Left colon (tissue), 2 donors: ENCODE measurements at regions of chr10 and their contacts with region 1.

Region 1: DNA sequence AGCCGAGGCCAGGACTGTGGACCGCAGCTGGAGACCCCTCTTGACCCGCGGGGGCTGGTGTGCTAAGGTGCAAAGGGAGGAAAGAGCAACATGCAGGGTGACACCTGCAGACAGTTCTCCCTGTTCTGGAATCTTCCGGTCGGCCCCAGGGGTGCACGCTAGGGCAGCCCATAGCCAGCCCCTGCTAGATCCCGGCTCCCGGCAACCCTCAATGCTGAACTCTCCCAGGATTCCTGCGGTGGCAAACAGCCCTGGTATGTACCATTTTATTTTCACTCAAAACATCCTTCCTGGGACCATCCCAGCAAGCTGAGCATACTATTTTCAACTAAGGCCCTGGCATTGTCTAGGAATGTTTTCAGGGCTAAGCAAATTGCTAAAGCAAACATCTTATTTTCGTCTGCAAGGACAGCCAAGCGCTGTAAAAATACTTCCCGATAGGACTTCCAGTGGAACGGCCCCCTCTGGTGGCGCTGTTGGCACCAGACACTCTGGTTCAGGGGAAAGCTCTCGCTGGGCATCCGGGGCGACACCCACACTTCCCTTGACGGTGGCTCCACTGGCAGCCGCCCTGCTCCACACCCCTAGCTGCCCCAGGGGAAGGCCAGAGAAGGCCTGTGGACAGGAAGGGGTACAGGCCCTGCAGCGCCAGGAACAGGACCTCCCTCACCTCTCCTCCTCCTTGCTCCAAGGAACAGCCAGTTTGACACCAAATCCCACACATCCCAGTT is 99.4 kb downstream of the CTBP2 start:
- DNase-seq: peak; percentile 90 to 92
- ATAC-seq: peak; percentile 70

Region 2: GRCh38 chr10:124906551-124907001 is 154.4 kb before region 1 on chr10:
- intact Hi-C with region 1: no loop called
- DNase-seq: no peak
- ATAC-seq: no peak

Region 3: GRCh38 chr10:125144693-125145623 is 84.0 kb after region 1 on chr10:
- intact Hi-C with region 1: loop called in 1 of 2 experiments (anchors 10 kb)
- DNase-seq: no peak
- ATAC-seq: peak; percentile 24